HEK293T (cell line): ENCODE measurements at regions of chr6 and their contacts with region 1.

Region 1: GRCh38 chr6:119110601-119111548 is 32.4 kb upstream of the FAM184A start:
- DNase-seq: peak; percentile 66

Region 2: DNA sequence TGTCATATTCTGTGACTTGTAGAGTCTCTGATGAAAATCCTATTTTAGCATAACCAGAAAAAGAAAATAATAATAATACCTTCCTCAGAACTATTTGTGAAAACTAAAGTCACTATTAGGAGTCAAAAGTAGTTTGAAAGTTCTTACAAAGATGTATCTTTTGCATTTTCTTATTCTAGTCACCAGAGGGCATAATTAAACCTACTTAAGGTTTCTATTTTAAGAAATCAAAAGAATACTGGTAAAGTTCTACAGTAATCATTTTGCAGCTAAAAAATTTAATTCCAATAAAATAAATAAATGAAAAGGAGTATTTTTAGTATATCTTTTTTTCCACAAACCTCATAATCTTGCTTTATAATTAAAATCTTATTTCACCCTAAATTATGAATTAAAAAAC is 147.9 kb before region 1 on chr6:
- CTCF ChIA-PET with region 1: interaction called, 17 read pairs
- POLR2A ChIA-PET with region 1: interaction called, 4 read pairs
- DNase-seq: no peak

Region 3: GRCh38 chr6:118968416-118968815 is 142.5 kb before region 1 on chr6:
- CTCF ChIA-PET with region 1: interaction called, 17 read pairs
- POLR2A ChIA-PET with region 1: interaction called, 4 read pairs
- DNase-seq: peak; percentile 24

Region 4: GRCh38 chr6:119138906-119139541 is 28.1 kb after region 1 on chr6:
- CTCF ChIA-PET with region 1: no interaction called
- POLR2A ChIA-PET with region 1: no interaction called
- DNase-seq: no peak